H1 (cell line): ENCODE measurements at regions of chr19 and their contacts with region 1.

Region 1: DNA sequence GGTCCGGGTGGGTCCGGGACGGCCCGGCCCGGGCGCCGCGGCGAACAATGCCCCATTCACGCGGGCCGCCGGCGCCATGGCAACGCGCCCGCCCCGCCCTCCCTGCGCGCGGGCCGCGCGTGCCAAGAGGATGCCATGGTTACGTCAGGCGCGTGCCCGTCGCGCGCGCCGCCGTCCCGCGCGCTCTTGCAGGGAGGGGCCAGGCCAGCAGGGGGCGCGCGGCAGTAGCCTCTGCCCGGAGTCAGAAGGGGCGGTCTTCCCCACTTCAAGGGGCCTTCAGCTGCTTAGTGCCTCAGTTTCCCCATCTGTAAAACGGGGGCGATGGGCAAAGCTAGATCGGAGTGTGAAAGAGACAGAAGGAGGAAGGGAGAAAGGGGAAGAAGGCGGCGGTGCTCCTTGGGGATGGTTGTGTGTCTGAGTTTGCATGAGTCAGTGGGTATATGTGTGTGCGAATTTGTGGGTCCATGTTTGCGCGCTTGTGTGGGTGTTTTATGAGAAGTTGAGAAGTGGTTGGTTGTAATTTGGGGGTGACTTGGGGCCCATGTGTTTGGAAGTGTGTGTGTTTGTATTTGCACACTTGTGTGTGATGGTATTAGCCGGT is 11.6 kb upstream of the NFIX start:
- DNase-seq: peak in 1 of 2 experiments; percentile 97
- H3K4me3 ChIP-seq: peak overlapping the region in 2 of 4 experiments; percentile 11 to 63; a peak in 3 of 8 replicates
- H3K27ac ChIP-seq: no peak overlapping the region
- H3K4me1 ChIP-seq: peaks cover 0 to 7% (median 3%) of the 10 kb centered on the region in 4 experiments; a peak in 4 of 7 replicates
- H3K27me3 ChIP-seq: peaks cover 2 to 41% (median 32%) of the 10 kb centered on the region in 4 experiments
- CTCF ChIP-seq: peak; percentile 87 to 89 (median 88)
- EP300 ChIP-seq: peak in 1 of 2 experiments; percentile 31; a peak in 1 of 3 replicates
- POLR2A ChIP-seq: no peak
- RAD21 ChIP-seq: peak; percentile 64 to 73

Region 2: GRCh38 chr19:13002166-13002898 is 18.7 kb after region 1 on chr19:
- CTCF ChIA-PET with region 1: interaction called, 14 read pairs
- POLR2A ChIA-PET with region 1: interaction called, 3 read pairs
- DNase-seq: no peak
- H3K4me3 ChIP-seq: no peak overlapping the region
- H3K27ac ChIP-seq: no peak overlapping the region
- H3K4me1 ChIP-seq: peaks cover 0 to 6% (median 0%) of the 10 kb centered on the region in 4 experiments; a peak in 1 of 7 replicates
- H3K27me3 ChIP-seq: peaks cover 16 to 94% (median 74%) of the 10 kb centered on the region in 4 experiments
- CTCF ChIP-seq: no peak
- EP300 ChIP-seq: no peak
- POLR2A ChIP-seq: no peak
- RAD21 ChIP-seq: no peak

Region 3: GRCh38 chr19:13007292-13008045 is 23.8 kb after region 1 on chr19:
- CTCF ChIA-PET with region 1: interaction called, 12 read pairs
- POLR2A ChIA-PET with region 1: interaction called, 3 read pairs
- DNase-seq: no peak
- H3K4me3 ChIP-seq: no peak overlapping the region
- H3K27ac ChIP-seq: no peak overlapping the region
- H3K4me1 ChIP-seq: peaks cover 4 to 28% (median 16%) of the 10 kb centered on the region in 4 experiments
- H3K27me3 ChIP-seq: peaks cover 52 to 96% (median 87%) of the 10 kb centered on the region in 4 experiments
- CTCF ChIP-seq: peak in 1 of 3 experiments; percentile 10; a peak in 1 of 4 replicates
- EP300 ChIP-seq: no peak
- POLR2A ChIP-seq: no peak
- RAD21 ChIP-seq: no peak

Region 4: GRCh38 chr19:13060964-13061927 is 77.6 kb after region 1 on chr19:
- CTCF ChIA-PET with region 1: interaction called, 153 read pairs
- POLR2A ChIA-PET with region 1: interaction called, 3 read pairs
- DNase-seq: peak in 1 of 2 experiments; percentile 97
- H3K4me3 ChIP-seq: peak overlapping the region; percentile 17 to 60 (median 46); a peak in 7 of 8 replicates
- H3K27ac ChIP-seq: no peak overlapping the region
- H3K4me1 ChIP-seq: peaks cover 0 to 14% (median 9%) of the 10 kb centered on the region in 4 experiments; a peak in 6 of 7 replicates
- H3K27me3 ChIP-seq: peaks cover 56 to 76% (median 72%) of the 10 kb centered on the region in 4 experiments
- CTCF ChIP-seq: peak; percentile 95 to 98 (median 95)
- EP300 ChIP-seq: peak in 1 of 2 experiments; percentile 46; a peak in 1 of 3 replicates
- POLR2A ChIP-seq: no peak
- RAD21 ChIP-seq: peak; percentile 82 to 91

Region 5: DNA sequence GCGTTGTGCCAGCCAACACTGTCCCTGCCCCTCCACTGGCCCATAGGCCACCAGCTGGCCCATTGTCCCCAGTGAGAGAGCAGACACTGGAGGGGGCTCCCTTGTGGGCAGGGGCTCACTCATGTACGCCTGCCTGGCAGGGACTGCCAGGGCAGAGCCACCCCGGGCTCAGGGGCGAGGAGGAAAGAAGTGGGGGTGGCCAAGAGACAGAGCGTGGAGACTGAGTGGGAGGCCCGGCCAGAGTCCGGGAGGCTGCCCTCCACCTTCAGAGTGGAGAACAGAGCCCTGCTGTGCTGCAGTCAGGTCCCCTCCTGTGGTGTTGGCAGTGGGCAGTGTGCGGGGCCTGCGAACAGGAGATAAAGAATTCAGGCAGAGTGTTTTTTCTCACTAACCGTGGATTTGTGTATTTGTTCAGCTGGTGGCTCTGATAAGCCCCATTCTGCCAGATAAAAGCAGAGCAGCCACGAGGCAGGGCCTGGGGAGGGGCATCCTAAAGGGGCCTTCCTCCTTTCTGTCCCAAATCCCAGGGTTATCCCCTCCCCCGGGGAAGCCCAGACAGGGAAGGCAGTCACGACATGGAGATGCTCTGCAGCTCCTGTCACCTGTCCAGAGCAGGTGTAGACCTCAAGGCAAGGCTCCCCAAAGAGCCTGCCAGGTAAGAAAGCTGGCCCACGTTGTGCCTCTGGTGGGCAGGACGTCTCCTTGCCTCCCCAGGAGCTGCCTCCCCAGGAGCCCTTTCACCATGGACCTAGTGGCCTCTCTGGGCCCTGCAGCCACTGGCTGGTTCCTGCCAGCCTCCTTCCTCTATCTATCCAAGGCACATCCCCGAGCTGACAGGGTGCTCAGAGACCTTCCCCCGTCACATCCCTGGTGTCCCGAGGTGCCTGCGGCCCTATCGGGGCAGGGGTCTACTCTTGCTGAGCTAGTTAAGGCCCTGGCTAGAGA is 86.0 kb after region 1 on chr19:
- CTCF ChIA-PET with region 1: interaction called, 153 read pairs
- POLR2A ChIA-PET with region 1: no interaction called
- DNase-seq: no peak
- H3K4me3 ChIP-seq: no peak overlapping the region
- H3K27ac ChIP-seq: no peak overlapping the region
- H3K4me1 ChIP-seq: no peaks in the 10 kb centered on the region; a peak in 1 of 7 replicates
- H3K27me3 ChIP-seq: peaks cover 0 to 5% (median 2%) of the 10 kb centered on the region in 4 experiments; a peak in 3 of 7 replicates
- CTCF ChIP-seq: no peak
- EP300 ChIP-seq: no peak
- POLR2A ChIP-seq: no peak
- RAD21 ChIP-seq: no peak

Region 6: GRCh38 chr19:13082192-13083007 is 98.8 kb after region 1 on chr19:
- CTCF ChIA-PET with region 1: interaction called, 431 read pairs
- POLR2A ChIA-PET with region 1: interaction called, 3 read pairs
- DNase-seq: no peak
- H3K4me3 ChIP-seq: no peak overlapping the region
- H3K27ac ChIP-seq: no peak overlapping the region
- H3K4me1 ChIP-seq: peaks cover 11 to 29% (median 19%) of the 10 kb centered on the region in 4 experiments
- H3K27me3 ChIP-seq: peaks cover 0 to 16% (median 8%) of the 10 kb centered on the region in 4 experiments; a peak in 3 of 7 replicates
- CTCF ChIP-seq: peak; percentile 22 to 42 (median 36); a peak in 3 of 4 replicates
- EP300 ChIP-seq: no peak
- POLR2A ChIP-seq: no peak
- RAD21 ChIP-seq: peak; percentile 48 to 54

Region 7: GRCh38 chr19:13099073-13099999 is 115.7 kb after region 1 on chr19:
- CTCF ChIA-PET with region 1: interaction called, 431 read pairs
- POLR2A ChIA-PET with region 1: interaction called, 15 read pairs
- DNase-seq: peak in 1 of 2 experiments; percentile 74
- H3K4me3 ChIP-seq: peak overlapping the region in 3 of 4 experiments; percentile 1 to 50 (median 12); a peak in 6 of 8 replicates
- H3K27ac ChIP-seq: no peak overlapping the region
- H3K4me1 ChIP-seq: peaks cover 0 to 28% (median 13%) of the 10 kb centered on the region in 4 experiments; a peak in 5 of 7 replicates
- H3K27me3 ChIP-seq: peaks cover 33 to 80% (median 67%) of the 10 kb centered on the region in 4 experiments
- CTCF ChIP-seq: no peak
- EP300 ChIP-seq: no peak
- POLR2A ChIP-seq: no peak
- RAD21 ChIP-seq: no peak